ENCODE measurements at regions of chr12 and their contacts with region 1.

Region 1: GRCh38 chr12:4276524-4277204 is 3.1 kb downstream of the CCND2 start:
- DNase-seq: peak; percentile 61
- ATAC-seq: peak; percentile 40
- H3K4me3 Mint-ChIP-seq: peak overlapping the region; percentile 91
- H3K27ac Mint-ChIP-seq: peak overlapping the region; percentile 26
- H3K4me1 Mint-ChIP-seq: peaks cover 34% of the 10 kb centered on the region
- H3K27me3 Mint-ChIP-seq: no peaks in the 10 kb centered on the region
- CTCF ChIP-seq: peak; percentile 48

Region 2: GRCh38 chr12:3299929-3300832 is 976.5 kb before region 1 on chr12:
- CTCF ChIA-PET with region 1: interaction called, 16 read pairs
- POLR2A ChIA-PET with region 1: no interaction called
- intact Hi-C with region 1: loop called (anchors 1 kb)
- DNase-seq: peak; percentile 63
- ATAC-seq: peak; percentile 85
- H3K4me3 Mint-ChIP-seq: peak overlapping the region; percentile 74
- H3K27ac Mint-ChIP-seq: peak overlapping the region; percentile 73
- H3K4me1 Mint-ChIP-seq: peaks cover 11% of the 10 kb centered on the region
- H3K27me3 Mint-ChIP-seq: peaks cover 25% of the 10 kb centered on the region
- CTCF ChIP-seq: peak; percentile 37

Region 3: GRCh38 chr12:3872800-3873636 is 403.6 kb before region 1 on chr12 and contains the start of gene PARP11:
- CTCF ChIA-PET with region 1: interaction called, 3 read pairs
- POLR2A ChIA-PET with region 1: interaction called, 18 read pairs
- intact Hi-C with region 1: loop called (anchors 1 kb)
- DNase-seq: peak; percentile 91
- ATAC-seq: peak; percentile 98
- H3K4me3 Mint-ChIP-seq: peak within 1 kb of the TSS; percentile 91
- H3K27ac Mint-ChIP-seq: peak within 1 kb of the TSS; percentile 93
- H3K4me1 Mint-ChIP-seq: peaks cover 48% of the 10 kb centered on the region
- H3K27me3 Mint-ChIP-seq: peaks cover 3% of the 10 kb centered on the region
- CTCF ChIP-seq: no peak
- total RNA-seq, gene PARP11: 21.4 and 27.2 TPM in 2 replicates

Region 4: GRCh38 chr12:3998968-3999826 is 277.5 kb before region 1 on chr12:
- CTCF ChIA-PET with region 1: interaction called, 206 read pairs
- POLR2A ChIA-PET with region 1: interaction called, 7 read pairs
- intact Hi-C with region 1: loop called (anchors 1 kb)
- DNase-seq: no peak
- ATAC-seq: no peak
- H3K4me3 Mint-ChIP-seq: no peak overlapping the region
- H3K27ac Mint-ChIP-seq: no peak overlapping the region
- H3K4me1 Mint-ChIP-seq: peaks cover 4% of the 10 kb centered on the region
- H3K27me3 Mint-ChIP-seq: peaks cover 6% of the 10 kb centered on the region
- CTCF ChIP-seq: no peak

Region 5: GRCh38 chr12:4118017-4118510 is 158.6 kb before region 1 on chr12:
- CTCF ChIA-PET with region 1: interaction called, 8 read pairs
- POLR2A ChIA-PET with region 1: interaction called, 44 read pairs
- intact Hi-C with region 1: no loop called
- DNase-seq: no peak
- ATAC-seq: peak; percentile 80
- H3K4me3 Mint-ChIP-seq: peak overlapping the region; percentile 69
- H3K27ac Mint-ChIP-seq: peak overlapping the region; percentile 81
- H3K4me1 Mint-ChIP-seq: peaks cover 56% of the 10 kb centered on the region
- H3K27me3 Mint-ChIP-seq: no peaks in the 10 kb centered on the region
- CTCF ChIP-seq: no peak

Region 6: GRCh38 chr12:4178424-4179170 is 98.1 kb before region 1 on chr12:
- CTCF ChIA-PET with region 1: no interaction called
- POLR2A ChIA-PET with region 1: no interaction called
- intact Hi-C with region 1: no loop called
- DNase-seq: no peak
- ATAC-seq: no peak
- H3K4me3 Mint-ChIP-seq: no peak overlapping the region
- H3K27ac Mint-ChIP-seq: peak overlapping the region; percentile 21
- H3K4me1 Mint-ChIP-seq: no peaks in the 10 kb centered on the region
- H3K27me3 Mint-ChIP-seq: no peaks in the 10 kb centered on the region
- CTCF ChIP-seq: no peak

Region 7: DNA sequence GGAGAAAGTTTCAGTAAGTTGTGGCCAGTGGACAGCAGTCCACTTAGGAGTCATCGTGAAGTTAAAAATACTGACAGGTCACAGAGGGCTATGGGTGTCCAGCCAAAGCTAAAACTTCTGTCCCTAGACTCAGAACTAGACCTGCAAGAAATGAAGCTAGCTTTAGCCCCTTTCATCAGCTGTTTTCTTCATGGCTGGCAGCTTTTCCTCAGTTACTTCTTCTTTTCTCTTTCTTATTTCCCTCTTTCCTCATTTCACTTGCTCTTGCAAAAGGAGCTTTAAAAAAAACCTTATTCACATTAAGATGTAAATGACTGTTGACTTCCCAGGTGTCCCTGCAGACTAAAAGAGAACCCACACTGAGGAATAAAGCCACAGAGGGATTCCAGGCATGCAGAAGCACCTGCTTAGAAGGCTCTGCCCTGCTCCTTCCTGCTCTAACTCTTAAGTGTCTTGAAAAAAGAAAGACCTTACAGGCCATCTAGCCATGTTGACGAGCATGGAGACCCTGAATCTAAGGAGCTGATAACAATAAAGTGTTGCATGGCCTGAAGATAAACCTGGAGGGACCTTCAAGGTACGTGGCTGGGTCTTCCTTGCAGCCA is 72.8 kb before region 1 on chr12:
- CTCF ChIA-PET with region 1: interaction called, 8 read pairs
- POLR2A ChIA-PET with region 1: interaction called, 52 read pairs
- intact Hi-C with region 1: loop called (anchors 1 kb)
- DNase-seq: no peak
- ATAC-seq: peak; percentile 15
- H3K4me3 Mint-ChIP-seq: peak overlapping the region; percentile 1
- H3K27ac Mint-ChIP-seq: peak overlapping the region; percentile 63
- H3K4me1 Mint-ChIP-seq: peaks cover 53% of the 10 kb centered on the region
- H3K27me3 Mint-ChIP-seq: no peaks in the 10 kb centered on the region
- CTCF ChIP-seq: no peak

Region 8: GRCh38 chr12:4320853-4321701 is 44.4 kb after region 1 on chr12 and contains the start of gene TIGAR:
- CTCF ChIA-PET with region 1: interaction called, 3 read pairs
- POLR2A ChIA-PET with region 1: interaction called, 22 read pairs
- intact Hi-C with region 1: loop called (anchors 1 kb)
- DNase-seq: peak; percentile 94
- ATAC-seq: peak; percentile 97
- H3K4me3 Mint-ChIP-seq: peak within 1 kb of the TSS; percentile 95
- H3K27ac Mint-ChIP-seq: peak within 1 kb of the TSS; percentile 92
- H3K4me1 Mint-ChIP-seq: peaks cover 34% of the 10 kb centered on the region
- H3K27me3 Mint-ChIP-seq: no peaks in the 10 kb centered on the region
- CTCF ChIP-seq: no peak
- total RNA-seq, gene TIGAR: 10.0 and 10.2 TPM in 2 replicates

Measured in activated B cell treated with CpG ODN at 0.5 μM for 24 hours (primary cell).